ENCODE measurements at regions of chr2 and their contacts with region 1.

Region 1: GRCh38 chr2:40554668-40555285 is 102.9 kb upstream of the SLC8A1 start:
- DNase-seq: peak; percentile 51 to 53
- ATAC-seq: peak; percentile 69 to 86 (median 78)
- H3K4me3 ChIP-seq: no peak overlapping the region
- H3K27ac ChIP-seq: no peak overlapping the region
- H3K4me1 ChIP-seq: no peaks in the 10 kb centered on the region
- H3K27me3 ChIP-seq: no peaks in the 10 kb centered on the region
- CTCF ChIP-seq: peak; percentile 95

Region 2: DNA sequence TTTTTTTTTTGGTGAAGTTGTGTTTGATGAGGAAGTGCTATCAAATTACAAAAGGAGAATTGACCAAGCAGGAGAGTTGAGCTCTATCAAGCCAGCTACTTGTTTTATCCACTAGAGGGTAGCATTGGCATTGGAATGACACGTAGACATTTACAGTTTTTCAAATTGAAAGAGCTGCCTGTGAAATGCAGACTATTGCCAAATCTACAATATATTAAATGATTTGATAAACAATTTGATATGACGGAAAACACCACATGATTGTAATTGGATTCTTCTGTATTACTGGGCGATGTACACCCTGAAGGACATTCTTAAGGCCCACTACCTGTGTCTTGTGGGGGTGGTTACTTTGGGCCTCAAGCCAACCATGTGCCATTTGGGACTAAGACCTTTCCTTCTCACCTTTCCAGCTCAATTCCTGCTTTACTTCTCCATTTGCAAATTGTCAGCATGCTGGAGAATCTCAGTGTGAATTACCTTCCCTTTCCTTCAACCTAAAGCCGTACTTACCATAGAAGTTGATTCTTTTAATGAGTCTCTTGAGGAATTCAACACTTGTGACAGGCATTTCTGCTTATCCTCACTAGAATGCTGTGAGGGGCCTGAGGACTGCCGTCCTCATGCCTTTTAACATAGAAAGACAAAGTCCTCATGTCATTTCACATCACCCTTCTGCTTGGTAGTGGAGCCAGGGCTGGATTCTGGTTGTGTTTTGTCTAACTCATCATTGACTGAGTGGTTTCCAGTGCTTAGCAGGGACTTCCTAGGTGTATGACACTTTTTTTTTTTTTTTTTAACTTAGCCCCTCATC is 640.9 kb before region 1 on chr2:
- intact Hi-C with region 1: loop called (anchors 2 to 5 kb)
- DNase-seq: no peak
- ATAC-seq: peak in 3 of 4 donors; percentile 46 to 77 (median 65)
- H3K4me3 ChIP-seq: no peak overlapping the region
- H3K27ac ChIP-seq: no peak overlapping the region
- H3K4me1 ChIP-seq: no peaks in the 10 kb centered on the region
- H3K27me3 ChIP-seq: peaks cover 0 to 3% (median 0%) of the 10 kb centered on the region in 3 donors
- CTCF ChIP-seq: peak; percentile 83

Region 3: GRCh38 chr2:40212804-40213470 is 341.8 kb before region 1 on chr2:
- intact Hi-C with region 1: loop called in 1 of 2 experiments (anchors 10 kb)
- DNase-seq: no peak
- ATAC-seq: peak in 2 of 4 donors; percentile 49 to 54
- H3K4me3 ChIP-seq: no peak overlapping the region
- H3K27ac ChIP-seq: no peak overlapping the region
- H3K4me1 ChIP-seq: no peaks in the 10 kb centered on the region
- H3K27me3 ChIP-seq: no peaks in the 10 kb centered on the region
- CTCF ChIP-seq: peak; percentile 37

Region 4: GRCh38 chr2:40244675-40245074 is 310.1 kb before region 1 on chr2:
- intact Hi-C with region 1: loop called in 1 of 2 experiments (anchors 2 kb)
- DNase-seq: peak; percentile 42 to 57
- ATAC-seq: peak; percentile 68 to 89 (median 78)
- H3K4me3 ChIP-seq: no peak overlapping the region
- H3K27ac ChIP-seq: no peak overlapping the region
- H3K4me1 ChIP-seq: no peaks in the 10 kb centered on the region
- H3K27me3 ChIP-seq: no peaks in the 10 kb centered on the region
- CTCF ChIP-seq: peak; percentile 55

Region 5: GRCh38 chr2:40448468-40449079 is 106.2 kb before region 1 on chr2:
- intact Hi-C with region 1: loop called in 1 of 2 experiments (anchors 5 kb)
- DNase-seq: no peak
- ATAC-seq: no peak
- H3K4me3 ChIP-seq: no peak overlapping the region
- H3K27ac ChIP-seq: no peak overlapping the region
- H3K4me1 ChIP-seq: no peaks in the 10 kb centered on the region
- H3K27me3 ChIP-seq: peaks cover 0 to 34% (median 1%) of the 10 kb centered on the region in 3 donors
- CTCF ChIP-seq: peak; percentile 40

Region 6: DNA sequence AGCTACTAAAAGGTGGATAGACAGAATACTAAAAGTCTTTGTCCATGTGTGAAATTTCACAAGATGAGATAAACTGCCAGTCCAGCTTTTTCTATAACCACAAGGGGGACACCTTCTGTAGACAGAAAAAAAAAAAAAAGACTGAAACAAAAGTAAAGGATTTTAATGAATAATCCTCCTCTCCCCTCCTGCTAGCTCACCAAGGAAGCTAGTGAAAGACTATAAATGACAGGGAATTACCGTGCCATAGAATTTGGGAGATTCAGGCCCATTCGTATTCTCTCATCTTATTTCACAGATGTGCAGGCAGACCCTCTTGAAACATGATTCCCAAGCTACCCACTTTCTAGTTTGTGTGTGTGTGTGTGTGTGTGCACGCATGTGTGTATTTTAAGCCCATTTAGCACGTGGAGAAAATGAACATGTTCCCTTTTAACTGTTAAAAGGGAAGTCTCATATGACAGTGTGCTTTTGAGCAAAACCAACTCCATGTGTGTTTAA is 66.6 kb before region 1 on chr2:
- intact Hi-C with region 1: loop called in 1 of 2 experiments (anchors 2 kb)
- DNase-seq: no peak
- ATAC-seq: peak in 1 of 4 donors; percentile 33
- H3K4me3 ChIP-seq: no peak overlapping the region
- H3K27ac ChIP-seq: no peak overlapping the region
- H3K4me1 ChIP-seq: peaks cover 6% of the 10 kb centered on the region
- H3K27me3 ChIP-seq: peaks cover 0 to 3% (median 0%) of the 10 kb centered on the region in 3 donors
- CTCF ChIP-seq: peak; percentile 41